ENCODE measurements at regions of chr21 and their contacts with region 1.

Region 1: DNA sequence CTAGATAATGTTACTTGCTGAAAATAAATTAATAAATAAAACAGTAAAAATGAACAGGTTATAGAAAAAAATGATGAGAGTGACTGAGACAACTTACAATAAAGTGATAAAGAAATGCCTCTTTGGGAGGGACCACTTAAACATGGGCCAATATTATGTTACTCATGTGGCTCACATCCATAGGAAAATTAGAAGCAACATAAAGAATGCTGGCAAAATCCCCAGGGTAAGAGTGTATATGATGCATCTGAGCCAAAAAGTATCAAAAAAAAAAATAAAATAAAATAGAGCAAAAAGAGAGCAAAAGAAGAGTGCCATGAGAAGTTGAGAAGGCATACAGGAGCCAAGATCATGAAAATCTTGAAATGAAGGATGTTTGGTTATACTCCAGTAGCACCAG is 818.0 kb downstream of the LTN1 start:
- DNase-seq: no peak
- ATAC-seq: no peak
- H3K4me3 ChIP-seq: no peak overlapping the region
- H3K27ac ChIP-seq: no peak overlapping the region
- H3K4me1 ChIP-seq: no peaks in the 10 kb centered on the region
- H3K27me3 ChIP-seq: no peaks in the 10 kb centered on the region
- CTCF ChIP-seq: no peak

Region 2: DNA sequence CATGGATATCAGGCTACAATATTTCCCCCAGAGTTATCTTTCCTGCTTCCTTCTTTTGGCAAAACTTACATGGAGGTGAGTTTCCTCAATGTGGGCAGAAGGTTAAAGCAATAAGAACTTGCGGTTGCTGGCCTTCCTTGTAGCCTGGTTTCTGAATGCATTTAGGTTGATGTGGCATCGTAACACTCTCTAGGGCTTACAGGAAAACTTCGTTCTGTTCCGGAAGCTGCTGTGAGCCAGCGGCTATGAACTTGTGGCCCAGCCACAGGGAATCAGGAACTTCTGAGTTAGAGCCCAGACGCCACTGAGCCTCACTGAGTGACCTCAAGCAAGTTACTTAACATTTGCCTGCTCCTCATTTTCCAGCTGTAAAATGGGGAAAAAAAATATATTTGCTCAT is 584.4 kb before region 1 on chr21:
- CTCF ChIA-PET with region 1: no interaction called
- POLR2A ChIA-PET with region 1: no interaction called
- in situ Hi-C with region 1: no loop called
- intact Hi-C with region 1: no loop called
- DNase-seq: no peak
- ATAC-seq: no peak
- H3K4me3 ChIP-seq: no peak overlapping the region
- H3K27ac ChIP-seq: no peak overlapping the region
- H3K4me1 ChIP-seq: no peaks in the 10 kb centered on the region
- H3K27me3 ChIP-seq: no peaks in the 10 kb centered on the region
- CTCF ChIP-seq: no peak

Region 3: DNA sequence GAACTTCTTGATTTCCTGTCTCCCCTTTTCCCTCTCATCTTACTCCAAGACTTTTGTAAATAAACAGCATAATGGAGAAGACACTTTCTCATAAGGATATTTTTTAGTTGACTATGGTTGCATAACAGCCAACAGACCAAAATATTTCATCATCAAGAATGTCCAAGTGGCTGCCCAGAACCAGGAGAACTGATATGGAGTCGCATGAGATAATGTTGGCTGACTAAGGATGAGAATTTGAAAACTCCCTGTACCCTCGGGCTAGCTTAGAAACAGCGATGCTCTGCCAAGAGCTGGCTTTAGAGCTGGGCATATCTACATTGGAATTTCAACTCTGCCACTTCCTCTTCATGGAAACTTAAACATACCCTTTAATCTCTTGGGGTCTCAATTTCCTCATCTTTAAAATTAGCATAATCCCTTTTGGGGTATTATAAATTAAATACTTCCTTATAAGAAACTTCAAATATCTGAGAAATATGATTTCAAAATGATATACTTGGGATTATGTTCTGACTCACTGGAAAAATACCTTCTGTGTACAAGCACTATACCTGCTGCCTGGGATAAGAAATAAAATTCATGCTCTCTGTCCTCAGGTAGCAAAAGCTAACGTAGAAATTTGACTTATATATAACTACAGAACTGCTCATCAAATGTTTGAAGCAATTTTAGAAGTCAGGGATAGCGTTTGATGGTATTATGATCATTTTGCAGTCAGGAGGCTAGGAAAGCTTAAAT is 40.7 kb after region 1 on chr21:
- CTCF ChIA-PET with region 1: no interaction called
- POLR2A ChIA-PET with region 1: no interaction called
- in situ Hi-C with region 1: no loop called
- intact Hi-C with region 1: no loop called
- DNase-seq: no peak
- ATAC-seq: no peak
- H3K4me3 ChIP-seq: no peak overlapping the region
- H3K27ac ChIP-seq: no peak overlapping the region
- H3K4me1 ChIP-seq: no peaks in the 10 kb centered on the region
- H3K27me3 ChIP-seq: no peaks in the 10 kb centered on the region
- CTCF ChIP-seq: no peak

Region 4: GRCh38 chr21:28663111-28663693 is 488.5 kb after region 1 on chr21:
- CTCF ChIA-PET with region 1: interaction called, 20 read pairs
- POLR2A ChIA-PET with region 1: no interaction called
- in situ Hi-C with region 1: no loop called
- intact Hi-C with region 1: no loop called
- DNase-seq: no peak
- ATAC-seq: no peak
- H3K4me3 ChIP-seq: no peak overlapping the region
- H3K27ac ChIP-seq: no peak overlapping the region
- H3K4me1 ChIP-seq: no peaks in the 10 kb centered on the region
- H3K27me3 ChIP-seq: no peaks in the 10 kb centered on the region
- CTCF ChIP-seq: no peak